Gastrocnemius medialis (tissue), 4 donors: ENCODE measurements at regions of chr13 and their contacts with region 1.

Region 1: DNA sequence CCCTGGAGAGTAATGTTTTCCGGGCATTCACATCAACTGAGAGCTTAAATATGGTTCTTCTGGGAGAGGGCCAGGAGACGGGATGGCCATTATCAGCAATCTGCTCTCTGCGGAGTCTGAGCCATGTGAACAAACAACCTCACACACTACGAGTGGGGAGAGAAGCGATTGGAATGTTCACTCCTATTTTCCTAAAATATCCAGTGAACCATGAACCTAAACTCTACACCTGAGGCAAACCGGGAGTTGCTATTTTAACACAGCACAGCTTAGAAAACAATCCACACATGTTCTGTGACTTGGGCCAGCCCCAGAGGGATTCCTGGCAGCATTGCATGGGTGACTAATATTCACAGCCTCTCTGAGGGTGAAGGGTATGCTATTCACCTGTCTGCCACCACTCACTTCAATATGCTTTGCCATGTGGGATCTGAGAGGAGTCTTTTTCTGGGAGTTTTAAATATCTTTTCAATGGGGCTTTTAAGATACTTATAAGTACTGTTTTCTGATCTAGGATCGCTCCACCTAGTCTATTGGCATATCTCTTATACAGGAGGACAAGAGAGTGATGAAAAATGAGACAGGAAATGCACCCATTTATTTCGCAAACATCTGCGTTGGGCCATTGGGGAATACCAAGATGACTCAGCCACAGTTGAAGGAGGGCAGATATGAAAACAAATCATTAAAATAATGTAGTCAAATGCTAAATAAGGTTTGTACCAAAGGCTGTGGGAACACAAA is 72.6 kb upstream of the SERP2 start:
- DNase-seq: peak; percentile 84 to 88
- ATAC-seq: peak; percentile 93 to 94
- H3K4me3 ChIP-seq: no peak overlapping the region
- H3K27ac ChIP-seq: peak overlapping the region; percentile 71 to 89 (median 86)
- H3K4me1 ChIP-seq: peaks cover 70 to 79% of the 10 kb centered on the region in 2 donors
- H3K27me3 ChIP-seq: no peaks in the 10 kb centered on the region
- CTCF ChIP-seq: peak in 1 of 5 experiments; percentile 37
- POLR2A ChIP-seq: peak in 1 of 2 donors; percentile 25

Region 2: DNA sequence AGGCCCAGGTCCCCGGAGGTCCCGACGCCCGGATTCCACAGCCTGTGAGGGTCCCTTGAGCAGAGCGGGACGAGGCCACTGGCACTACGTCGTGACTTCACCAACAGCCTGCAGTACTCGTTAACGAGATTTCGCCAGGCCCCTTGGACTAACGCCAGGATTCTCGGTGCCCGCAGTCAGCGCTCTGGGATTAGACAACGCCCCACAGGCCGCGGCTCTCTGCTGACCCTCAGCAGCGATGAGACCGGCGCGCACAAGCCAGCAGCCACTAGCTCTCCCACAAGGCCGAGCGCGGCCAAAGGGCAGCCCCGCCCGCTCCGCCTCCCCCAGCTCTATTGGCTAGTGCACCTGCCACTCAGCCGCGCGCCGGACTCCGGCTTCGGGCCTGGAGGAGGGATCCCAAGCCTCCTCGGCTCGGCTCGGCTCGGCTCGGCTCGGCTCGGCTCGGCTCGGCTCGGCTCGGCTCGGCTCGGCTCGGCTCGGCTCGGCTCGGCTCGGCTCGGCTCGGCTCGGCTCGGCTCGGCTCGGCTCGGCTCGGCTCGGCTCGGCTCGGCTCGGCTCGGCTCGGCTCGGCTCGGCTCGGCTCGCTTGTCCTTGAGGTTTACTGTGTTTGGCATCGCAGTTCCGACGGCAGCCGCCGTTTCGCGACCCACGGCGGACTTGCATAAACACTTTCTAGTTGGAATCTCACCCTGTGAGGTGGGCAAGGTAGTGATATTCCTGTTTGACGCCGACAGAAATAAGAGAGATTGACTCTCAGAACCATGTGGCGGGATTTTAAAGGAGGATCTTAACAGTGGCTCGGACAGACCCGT is 159.1 kb before region 1 on chr13:
- in situ Hi-C with region 1: no loop called
- intact Hi-C with region 1: loop called (anchors 5 kb)
- DNase-seq: peak; percentile 96 to 98
- ATAC-seq: peak; percentile 87 to 89
- H3K4me3 ChIP-seq: peak overlapping the region; percentile 54 to 72 (median 68)
- H3K27ac ChIP-seq: peak overlapping the region; percentile 92 to 98 (median 96)
- H3K4me1 ChIP-seq: peaks cover 9 to 21% of the 10 kb centered on the region in 2 donors
- H3K27me3 ChIP-seq: no peaks in the 10 kb centered on the region
- CTCF ChIP-seq: peak; percentile 23 to 31 (median 26)
- POLR2A ChIP-seq: peak; percentile 84 to 94

Region 3: GRCh38 chr13:44155422-44156293 is 145.4 kb before region 1 on chr13:
- in situ Hi-C with region 1: no loop called
- intact Hi-C with region 1: loop called (anchors 5 kb)
- DNase-seq: peak; percentile 43 to 75
- ATAC-seq: peak in 1 of 2 donors; percentile 28
- H3K4me3 ChIP-seq: peak overlapping the region; percentile 19 to 38 (median 32)
- H3K27ac ChIP-seq: peak overlapping the region; percentile 86 to 94 (median 92)
- H3K4me1 ChIP-seq: peaks cover 71 to 80% of the 10 kb centered on the region in 2 donors
- H3K27me3 ChIP-seq: no peaks in the 10 kb centered on the region
- CTCF ChIP-seq: peak in 1 of 5 experiments; percentile 13
- POLR2A ChIP-seq: no peak

Region 4: DNA sequence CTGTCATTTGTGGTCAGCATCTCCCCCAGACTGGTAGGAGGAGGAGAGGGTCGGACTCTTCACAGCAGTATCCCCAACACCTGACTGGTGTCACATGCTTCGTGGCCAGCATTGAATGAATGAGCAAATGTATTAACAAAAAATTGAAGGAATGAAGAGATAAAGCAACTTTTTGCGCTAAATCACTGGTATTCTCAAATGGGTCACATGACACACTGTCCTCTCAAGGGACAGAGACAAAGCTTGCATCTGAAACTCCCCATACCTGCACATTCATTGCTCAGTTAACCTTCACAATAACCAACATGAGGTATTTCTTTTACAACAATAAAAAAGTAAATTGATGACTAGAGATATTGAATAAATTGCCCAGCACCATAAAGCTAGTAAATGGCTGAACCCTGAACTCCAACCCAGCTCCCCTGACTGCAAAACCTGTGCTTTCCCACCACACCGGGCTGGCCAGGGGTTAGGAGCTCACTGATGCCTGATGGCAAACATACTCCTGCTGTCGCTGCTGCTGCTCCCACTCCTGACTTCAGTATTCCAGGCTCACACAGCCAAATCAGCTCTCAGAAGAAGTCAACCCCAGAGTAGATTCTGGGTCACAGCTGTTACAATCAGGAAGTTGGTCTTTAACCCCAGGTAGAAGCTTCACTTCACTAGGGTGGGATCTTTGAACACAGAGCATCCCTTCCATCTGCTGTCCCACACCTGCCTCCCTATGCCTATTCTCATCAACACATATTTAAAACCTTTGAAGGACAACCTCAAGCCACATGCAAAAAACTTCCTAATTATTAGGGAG is 27.2 kb before region 1 on chr13:
- in situ Hi-C with region 1: no loop called
- intact Hi-C with region 1: loop called (anchors 2 kb)
- DNase-seq: no peak
- ATAC-seq: no peak
- H3K4me3 ChIP-seq: peak overlapping the region in 2 of 4 donors; percentile 13 to 14
- H3K27ac ChIP-seq: peak overlapping the region; percentile 70 to 97 (median 93)
- H3K4me1 ChIP-seq: peaks cover 44 to 63% of the 10 kb centered on the region in 2 donors
- H3K27me3 ChIP-seq: no peaks in the 10 kb centered on the region
- CTCF ChIP-seq: no peak
- POLR2A ChIP-seq: no peak